Activated CD4-positive, alpha-beta T cell treated with anti-CD3 and anti-CD28 coated beads for 36 hours (primary cell): ENCODE measurements at regions of chr19 and their contacts with region 1.

Region 1: GRCh38 chr19:10085641-10086590 is at the start of gene SHFL:
- DNase-seq: peak; percentile 92
- ATAC-seq: peak; percentile 96
- H3K4me3 Mint-ChIP-seq: peak within 1 kb of the TSS; percentile 78
- H3K27ac Mint-ChIP-seq: peak within 1 kb of the TSS; percentile 74
- H3K4me1 Mint-ChIP-seq: peaks cover 11% of the 10 kb centered on the region
- H3K27me3 Mint-ChIP-seq: no peaks in the 10 kb centered on the region
- total RNA-seq, gene SHFL: 49.8 to 62.6 TPM

Region 2: DNA sequence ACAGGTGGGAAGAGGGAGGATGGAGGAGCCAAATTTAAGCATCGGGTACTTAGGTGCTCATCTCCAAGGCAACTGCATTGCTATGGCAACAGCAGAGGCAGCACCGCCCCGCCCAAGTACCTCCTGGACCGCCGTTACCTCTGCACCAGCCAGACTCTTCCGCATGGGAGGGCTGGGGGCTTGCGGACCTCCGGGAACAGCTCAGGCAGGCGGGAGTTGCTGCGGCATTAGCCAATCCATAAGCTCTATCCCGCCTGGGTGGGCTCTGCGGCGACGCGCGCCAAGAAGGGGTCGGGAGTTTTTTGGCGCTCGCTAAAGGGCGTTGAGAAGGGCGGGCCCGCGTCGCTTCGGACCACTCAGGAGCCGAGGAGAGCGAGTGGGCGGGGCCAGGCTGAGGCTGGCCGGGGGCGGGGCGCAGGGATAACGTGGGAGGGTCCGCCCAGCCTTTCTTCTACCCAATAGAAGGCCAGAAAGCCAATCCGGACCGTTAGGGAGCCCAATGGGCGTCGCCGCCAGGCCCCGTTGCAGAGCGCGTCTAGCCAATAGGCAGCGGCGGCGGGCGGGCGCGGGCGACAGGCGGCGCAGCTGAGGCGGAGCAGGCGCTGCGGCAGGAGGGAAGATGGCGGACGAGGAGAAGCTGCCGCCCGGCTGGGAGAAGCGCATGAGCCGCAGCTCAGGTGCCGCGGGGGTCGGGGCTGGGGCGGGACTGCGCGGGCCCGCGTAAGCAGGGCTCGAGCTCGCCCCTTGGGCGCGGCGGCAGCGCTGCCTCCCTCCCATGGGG is 251.0 kb before region 1 on chr19 and contains the start of gene PIN1:
- CTCF ChIA-PET with region 1: no interaction called
- POLR2A ChIA-PET with region 1: no interaction called
- intact Hi-C with region 1: loop called in 1 of 2 experiments (anchors 1 kb)
- DNase-seq: peak; percentile 100
- ATAC-seq: peak; percentile 99
- H3K4me3 Mint-ChIP-seq: peak within 1 kb of the TSS; percentile 86
- H3K27ac Mint-ChIP-seq: peak within 1 kb of the TSS; percentile 88
- H3K4me1 Mint-ChIP-seq: peaks cover 20% of the 10 kb centered on the region
- H3K27me3 Mint-ChIP-seq: no peaks in the 10 kb centered on the region
- total RNA-seq, gene PIN1: 70.4 to 74.2 TPM

Region 3: DNA sequence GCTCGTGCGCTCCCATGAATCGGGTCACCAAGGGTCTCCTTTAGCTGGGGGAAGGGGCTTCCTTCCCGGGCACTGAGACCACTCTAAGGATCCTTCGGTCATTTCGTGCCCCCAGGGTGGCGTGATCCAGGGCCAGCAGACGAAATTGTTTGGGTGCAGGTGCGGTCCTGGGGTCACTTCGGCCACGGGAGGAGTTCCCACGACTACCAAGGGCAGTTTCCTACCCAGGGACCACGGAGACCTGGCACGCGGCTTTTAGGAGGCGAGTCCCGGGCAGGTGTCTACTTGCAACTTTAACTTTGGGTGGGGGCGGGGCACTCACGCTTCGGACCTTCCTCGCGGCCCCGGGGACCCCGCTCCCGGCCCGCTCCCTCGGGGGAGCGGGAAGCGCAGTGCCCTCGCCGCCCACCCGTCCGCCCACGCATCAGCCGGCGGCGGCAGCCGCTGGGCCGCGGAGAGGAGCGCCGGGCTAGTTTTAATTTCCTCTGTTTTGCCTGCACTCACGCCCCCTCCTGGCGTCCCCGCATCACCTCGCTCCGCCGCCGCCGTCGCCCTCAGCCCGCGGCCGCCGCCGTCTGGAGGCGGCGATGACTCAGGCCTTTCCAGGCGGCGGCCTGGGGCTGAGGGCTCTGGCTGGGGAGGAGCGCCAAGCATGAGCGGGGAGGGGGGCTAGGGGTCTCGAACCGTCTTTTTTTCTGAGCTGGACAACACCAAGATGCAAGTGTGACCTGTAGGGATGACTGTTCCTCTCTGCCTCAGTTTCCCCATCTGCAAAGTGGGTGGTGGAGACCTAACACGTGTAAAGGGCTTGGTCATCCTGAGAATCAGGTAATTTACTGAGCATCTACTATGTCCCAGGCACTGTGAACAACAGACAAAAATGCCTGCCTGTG is 171.4 kb before region 1 on chr19:
- CTCF ChIA-PET with region 1: no interaction called
- POLR2A ChIA-PET with region 1: no interaction called
- intact Hi-C with region 1: no loop called
- DNase-seq: peak; percentile 93
- ATAC-seq: peak; percentile 97
- H3K4me3 Mint-ChIP-seq: peak overlapping the region; percentile 53
- H3K27ac Mint-ChIP-seq: no peak overlapping the region
- H3K4me1 Mint-ChIP-seq: peaks cover 3% of the 10 kb centered on the region
- H3K27me3 Mint-ChIP-seq: peaks cover 27% of the 10 kb centered on the region

Region 4: DNA sequence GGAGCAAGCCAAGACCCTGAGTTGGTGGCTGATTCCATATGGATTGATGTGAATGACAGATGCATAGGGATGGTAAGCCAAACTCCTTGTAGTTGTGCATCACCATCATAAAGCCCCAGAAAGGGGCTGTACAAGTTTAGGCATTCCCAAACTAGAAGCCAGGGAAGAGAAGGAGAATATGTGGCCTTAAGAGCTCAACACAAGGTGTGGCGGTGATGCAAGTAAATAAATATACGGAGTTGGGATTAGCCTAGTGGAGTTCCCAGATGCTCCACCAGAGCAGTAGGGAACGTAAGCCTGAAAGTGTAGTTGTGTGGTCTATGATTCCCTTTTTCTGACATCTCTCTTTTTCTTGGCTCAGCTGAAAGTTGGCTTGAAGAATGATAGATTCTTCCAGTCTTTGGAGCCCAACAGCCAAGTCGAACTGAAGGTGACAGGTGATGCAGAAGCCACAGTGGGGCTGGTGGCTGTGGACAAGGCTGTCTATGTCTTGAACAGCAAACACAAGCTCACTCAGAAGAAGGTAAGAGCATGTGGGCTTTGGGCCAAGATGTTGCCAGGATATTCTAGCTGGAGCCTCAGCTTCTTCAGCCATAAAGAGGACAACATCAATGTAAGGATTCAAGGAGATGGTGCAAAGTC is 42.5 kb before region 1 on chr19:
- CTCF ChIA-PET with region 1: no interaction called
- POLR2A ChIA-PET with region 1: no interaction called
- intact Hi-C with region 1: no loop called
- DNase-seq: no peak
- ATAC-seq: no peak
- H3K4me3 Mint-ChIP-seq: no peak overlapping the region
- H3K27ac Mint-ChIP-seq: no peak overlapping the region
- H3K4me1 Mint-ChIP-seq: no peaks in the 10 kb centered on the region
- H3K27me3 Mint-ChIP-seq: peaks cover 18% of the 10 kb centered on the region

Region 5: DNA sequence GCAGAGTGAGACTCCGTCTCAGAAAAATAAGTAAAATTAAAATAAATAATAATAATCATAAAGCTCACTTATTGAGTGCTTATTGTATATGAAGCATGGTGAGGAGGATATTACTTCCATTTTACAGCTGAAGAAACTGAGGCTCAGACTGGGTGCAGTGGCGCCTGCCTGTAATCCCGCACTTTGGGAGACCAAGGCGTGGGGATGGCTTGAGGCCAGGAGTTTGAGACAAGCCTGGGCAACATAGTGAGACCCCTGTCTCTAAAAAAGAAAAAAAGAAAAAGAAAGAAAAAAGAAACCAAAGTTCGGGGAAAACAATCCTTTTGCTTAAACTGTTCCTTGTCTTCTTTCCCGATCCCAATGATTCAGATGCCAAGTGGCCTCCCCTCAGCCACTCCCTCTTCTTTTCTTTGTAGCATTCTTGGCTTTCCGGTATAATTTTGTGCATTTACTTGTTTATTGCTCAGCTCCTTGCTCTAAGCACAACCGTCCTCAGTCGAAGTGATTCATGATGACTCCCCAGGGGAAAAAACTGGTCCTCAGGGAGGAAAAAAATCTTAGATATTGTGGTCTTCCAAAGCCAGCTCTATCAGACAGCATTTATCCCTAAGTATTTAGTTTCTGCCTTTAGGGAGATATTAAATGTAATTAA is 34.7 kb after region 1 on chr19:
- CTCF ChIA-PET with region 1: interaction called, 3 read pairs
- POLR2A ChIA-PET with region 1: no interaction called
- intact Hi-C with region 1: loop called in 1 of 2 experiments (anchors 1 kb)
- DNase-seq: no peak
- ATAC-seq: no peak
- H3K4me3 Mint-ChIP-seq: no peak overlapping the region
- H3K27ac Mint-ChIP-seq: no peak overlapping the region
- H3K4me1 Mint-ChIP-seq: peaks cover 15% of the 10 kb centered on the region
- H3K27me3 Mint-ChIP-seq: no peaks in the 10 kb centered on the region

Region 6: GRCh38 chr19:10168386-10168948 is 82.6 kb after region 1 on chr19:
- CTCF ChIA-PET with region 1: no interaction called
- POLR2A ChIA-PET with region 1: no interaction called
- intact Hi-C with region 1: no loop called
- DNase-seq: no peak
- ATAC-seq: no peak
- H3K4me3 Mint-ChIP-seq: no peak overlapping the region
- H3K27ac Mint-ChIP-seq: peak overlapping the region; percentile 71
- H3K4me1 Mint-ChIP-seq: peaks cover 2% of the 10 kb centered on the region
- H3K27me3 Mint-ChIP-seq: no peaks in the 10 kb centered on the region